ENCODE measurements at regions of chr2 and their contacts with region 1.

Region 1: DNA sequence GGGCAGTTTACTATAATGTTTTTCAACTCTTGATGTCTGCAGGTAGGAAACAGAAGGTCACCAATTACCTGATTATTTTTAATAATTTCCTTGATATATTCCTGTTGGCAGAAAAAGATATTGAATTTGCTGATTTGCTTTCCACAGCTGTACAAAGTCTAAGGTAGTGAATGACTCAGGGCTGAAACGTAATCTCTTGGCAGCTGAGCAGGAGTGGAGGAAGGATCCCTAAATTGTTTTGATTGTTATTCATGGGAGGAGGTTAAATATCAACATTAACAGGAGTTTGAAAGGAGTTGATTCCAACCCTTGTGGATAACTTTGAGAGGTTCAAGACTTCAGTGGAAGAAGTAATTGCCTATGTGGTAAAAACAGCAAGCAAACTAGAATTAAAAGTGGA is 345.2 kb upstream of the SLC8A1 start:
- DNase-seq: no peak
- H3K4me3 ChIP-seq: no peak overlapping the region
- H3K27ac ChIP-seq: no peak overlapping the region
- H3K4me1 ChIP-seq: no peaks in the 10 kb centered on the region
- CTCF ChIP-seq: no peak

Region 2: GRCh38 chr2:40690525-40690924 is 106.6 kb before region 1 on chr2:
- CTCF ChIA-PET with region 1: no interaction called
- POLR2A ChIA-PET with region 1: interaction called, 10 read pairs
- intact Hi-C with region 1: no loop called
- DNase-seq: no peak
- H3K4me3 ChIP-seq: no peak overlapping the region
- H3K27ac ChIP-seq: no peak overlapping the region
- H3K4me1 ChIP-seq: no peaks in the 10 kb centered on the region
- CTCF ChIP-seq: no peak